Activated CD4-positive, alpha-beta T cell treated with anti-CD3 and anti-CD28 coated beads for 36 hours (primary cell): ENCODE measurements at regions of chr3 and their contacts with region 1.

Region 1: DNA sequence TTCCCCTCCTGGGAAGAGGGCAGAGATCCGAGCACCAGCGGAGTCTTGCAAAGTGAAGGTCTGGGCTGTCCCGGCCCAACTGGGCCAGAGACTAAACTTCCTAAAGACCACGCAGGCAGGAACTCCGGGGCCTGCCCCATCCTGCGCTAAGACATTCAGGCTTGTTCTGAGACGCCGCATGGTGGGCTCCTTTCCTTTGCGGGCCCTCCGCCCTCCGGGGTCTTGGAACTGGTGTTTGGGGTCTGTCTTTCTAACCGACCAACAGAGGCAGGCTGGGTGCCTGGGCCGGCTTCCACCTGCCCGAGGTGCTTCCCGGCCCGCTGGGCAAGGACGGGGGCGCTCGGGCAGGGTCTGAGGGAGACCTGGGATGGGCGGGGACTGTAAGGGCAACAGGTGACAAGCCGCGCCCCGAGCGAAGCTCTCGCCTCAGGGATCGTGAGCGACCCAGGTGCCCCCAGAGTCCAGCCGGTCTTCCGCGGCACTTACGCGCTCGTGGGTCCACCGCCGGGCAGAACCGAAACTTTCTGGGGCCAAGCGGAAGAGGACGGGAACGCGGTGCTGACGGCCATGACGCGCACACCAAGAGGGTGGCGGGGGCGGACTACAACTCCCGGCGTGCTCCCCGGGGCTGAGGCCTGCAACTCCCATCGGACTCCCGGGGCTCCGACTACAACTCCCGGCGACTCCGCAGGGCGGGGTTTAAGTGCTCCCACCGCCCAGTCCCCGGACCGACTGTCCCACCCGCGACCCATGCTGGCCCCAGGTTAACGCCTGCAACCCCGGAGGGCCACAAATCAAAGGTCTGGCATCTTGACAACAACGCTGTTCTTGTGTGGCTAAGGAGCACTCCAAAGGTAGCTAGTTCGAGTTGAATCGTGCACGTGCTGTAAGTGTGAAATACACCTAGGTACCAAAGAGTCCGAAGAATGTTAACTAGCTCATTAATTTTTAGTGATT is at the start of gene FYCO1:
- DNase-seq: peak; percentile 94
- ATAC-seq: peak; percentile 89
- H3K4me3 Mint-ChIP-seq: peak within 1 kb of the TSS; percentile 80
- H3K27ac Mint-ChIP-seq: peak within 1 kb of the TSS; percentile 93
- H3K4me1 Mint-ChIP-seq: peaks cover 43% of the 10 kb centered on the region
- H3K27me3 Mint-ChIP-seq: no peaks in the 10 kb centered on the region
- total RNA-seq, gene FYCO1: 8.2 to 10.6 TPM

Region 2: GRCh38 chr3:45962033-45962432 is 33.5 kb before region 1 on chr3:
- CTCF ChIA-PET with region 1: interaction called, 3 read pairs
- POLR2A ChIA-PET with region 1: no interaction called
- intact Hi-C with region 1: loop called in 1 of 2 experiments (anchors 2 kb)
- DNase-seq: peak; percentile 61
- ATAC-seq: peak; percentile 60
- H3K4me3 Mint-ChIP-seq: no peak overlapping the region
- H3K27ac Mint-ChIP-seq: no peak overlapping the region
- H3K4me1 Mint-ChIP-seq: peaks cover 43% of the 10 kb centered on the region
- H3K27me3 Mint-ChIP-seq: peaks cover 3% of the 10 kb centered on the region

Region 3: GRCh38 chr3:46017720-46018119 is 22.2 kb after region 1 on chr3:
- CTCF ChIA-PET with region 1: interaction called, 4 read pairs
- POLR2A ChIA-PET with region 1: no interaction called
- intact Hi-C with region 1: loop called in 1 of 2 experiments (anchors 2 kb)
- DNase-seq: no peak
- ATAC-seq: no peak
- H3K4me3 Mint-ChIP-seq: no peak overlapping the region
- H3K27ac Mint-ChIP-seq: no peak overlapping the region
- H3K4me1 Mint-ChIP-seq: peaks cover 22% of the 10 kb centered on the region
- H3K27me3 Mint-ChIP-seq: peaks cover 9% of the 10 kb centered on the region